Activated CD8-positive, alpha-beta T cell treated with anti-CD3 and anti-CD28 coated beads for 36 hours (primary cell): ENCODE measurements at regions of chr4 and their contacts with region 1.

Region 1: GRCh38 chr4:7055111-7055989 is 12.2 kb downstream of the TADA2B start:
- DNase-seq: no peak
- ATAC-seq: no peak
- H3K4me3 Mint-ChIP-seq: no peak overlapping the region
- H3K27ac Mint-ChIP-seq: no peak overlapping the region
- H3K4me1 Mint-ChIP-seq: peaks cover 26% of the 10 kb centered on the region
- H3K27me3 Mint-ChIP-seq: no peaks in the 10 kb centered on the region
- CTCF ChIP-seq: no peak

Region 2: GRCh38 chr4:6969826-6970800 is 85.2 kb before region 1 on chr4:
- CTCF ChIA-PET with region 1: no interaction called
- POLR2A ChIA-PET with region 1: no interaction called
- intact Hi-C with region 1: no loop called
- DNase-seq: no peak
- ATAC-seq: no peak
- H3K4me3 Mint-ChIP-seq: no peak overlapping the region
- H3K27ac Mint-ChIP-seq: no peak overlapping the region
- H3K4me1 Mint-ChIP-seq: peaks cover 15% of the 10 kb centered on the region
- H3K27me3 Mint-ChIP-seq: no peaks in the 10 kb centered on the region
- CTCF ChIP-seq: no peak

Region 3: DNA sequence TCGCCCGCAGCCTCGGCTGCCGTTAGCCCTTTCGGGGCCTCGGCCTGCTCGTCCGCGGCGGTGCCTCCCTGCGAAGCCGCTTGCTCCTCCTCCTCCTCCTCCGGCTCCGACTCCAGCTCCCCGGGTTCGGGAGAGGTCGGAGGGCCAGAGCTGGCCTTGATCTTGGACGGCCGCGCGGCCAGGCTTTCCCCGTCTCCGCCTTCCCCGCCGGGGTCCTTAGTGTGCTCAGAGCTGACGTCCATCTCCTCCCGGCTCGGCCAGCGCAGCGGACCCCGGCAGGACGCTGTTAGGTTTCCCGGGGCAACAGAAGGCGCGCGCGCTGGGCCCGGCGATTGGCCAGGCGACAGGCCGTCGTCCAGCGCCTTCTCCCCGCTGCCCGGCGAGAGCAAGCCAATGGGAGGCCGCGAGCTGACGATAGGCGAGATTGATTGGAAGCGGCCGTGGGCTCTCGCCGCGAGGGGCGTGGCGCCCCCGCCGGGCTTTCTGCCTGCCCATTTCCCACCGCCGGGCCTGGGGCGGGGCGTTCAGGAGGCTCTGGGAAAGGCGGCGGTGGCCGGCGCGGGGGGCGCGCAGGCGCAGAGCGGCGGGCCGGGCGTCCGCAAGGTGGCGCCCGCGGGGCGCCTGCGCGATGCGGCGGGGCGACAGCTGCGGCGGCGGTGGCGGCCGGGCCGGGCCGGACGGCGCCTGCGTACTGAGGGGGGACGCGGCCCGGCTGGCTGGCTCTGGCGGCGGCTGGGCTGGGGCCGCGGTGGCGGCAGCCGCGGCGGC is 12.5 kb before region 1 on chr4 and contains the start of gene TADA2B:
- CTCF ChIA-PET with region 1: interaction called, 8 read pairs
- POLR2A ChIA-PET with region 1: interaction called, 67 read pairs
- intact Hi-C with region 1: no loop called
- DNase-seq: peak; percentile 92
- ATAC-seq: peak; percentile 91
- H3K4me3 Mint-ChIP-seq: peak within 1 kb of the TSS; percentile 87
- H3K27ac Mint-ChIP-seq: peak within 1 kb of the TSS; percentile 73
- H3K4me1 Mint-ChIP-seq: peaks cover 46% of the 10 kb centered on the region
- H3K27me3 Mint-ChIP-seq: no peaks in the 10 kb centered on the region
- CTCF ChIP-seq: peak; percentile 14
- total RNA-seq, gene TADA2B: 7.7 to 10.0 TPM